Activated B cell treated with CpG ODN at 0.5 μM for 24 hours (primary cell): ENCODE measurements at regions of chr5 and their contacts with region 1.

Region 1: GRCh38 chr5:35089334-35090314 is 41.9 kb upstream of the AGXT2 start:
- DNase-seq: no peak
- ATAC-seq: no peak
- H3K4me3 Mint-ChIP-seq: no peak overlapping the region
- H3K27ac Mint-ChIP-seq: no peak overlapping the region
- H3K4me1 Mint-ChIP-seq: no peaks in the 10 kb centered on the region
- H3K27me3 Mint-ChIP-seq: peaks cover 3% of the 10 kb centered on the region
- CTCF ChIP-seq: peak; percentile 59

Region 2: GRCh38 chr5:34991486-34992238 is 98.0 kb before region 1 on chr5:
- CTCF ChIA-PET with region 1: no interaction called
- POLR2A ChIA-PET with region 1: no interaction called
- intact Hi-C with region 1: no loop called
- DNase-seq: no peak
- ATAC-seq: no peak
- H3K4me3 Mint-ChIP-seq: no peak overlapping the region
- H3K27ac Mint-ChIP-seq: no peak overlapping the region
- H3K4me1 Mint-ChIP-seq: no peaks in the 10 kb centered on the region
- H3K27me3 Mint-ChIP-seq: peaks cover 24% of the 10 kb centered on the region
- CTCF ChIP-seq: no peak

Region 3: GRCh38 chr5:35182541-35183535 is 93.2 kb after region 1 on chr5:
- CTCF ChIA-PET with region 1: no interaction called
- POLR2A ChIA-PET with region 1: no interaction called
- intact Hi-C with region 1: loop called (anchors 1 kb)
- DNase-seq: no peak
- ATAC-seq: peak; percentile 42
- H3K4me3 Mint-ChIP-seq: no peak overlapping the region
- H3K27ac Mint-ChIP-seq: no peak overlapping the region
- H3K4me1 Mint-ChIP-seq: no peaks in the 10 kb centered on the region
- H3K27me3 Mint-ChIP-seq: peaks cover 7% of the 10 kb centered on the region
- CTCF ChIP-seq: no peak

Region 4: GRCh38 chr5:35345222-35345621 is 255.6 kb after region 1 on chr5:
- CTCF ChIA-PET with region 1: no interaction called
- POLR2A ChIA-PET with region 1: no interaction called
- intact Hi-C with region 1: loop called (anchors 1 kb)
- DNase-seq: no peak
- ATAC-seq: no peak
- H3K4me3 Mint-ChIP-seq: no peak overlapping the region
- H3K27ac Mint-ChIP-seq: no peak overlapping the region
- H3K4me1 Mint-ChIP-seq: no peaks in the 10 kb centered on the region
- H3K27me3 Mint-ChIP-seq: no peaks in the 10 kb centered on the region
- CTCF ChIP-seq: no peak

Region 5: DNA sequence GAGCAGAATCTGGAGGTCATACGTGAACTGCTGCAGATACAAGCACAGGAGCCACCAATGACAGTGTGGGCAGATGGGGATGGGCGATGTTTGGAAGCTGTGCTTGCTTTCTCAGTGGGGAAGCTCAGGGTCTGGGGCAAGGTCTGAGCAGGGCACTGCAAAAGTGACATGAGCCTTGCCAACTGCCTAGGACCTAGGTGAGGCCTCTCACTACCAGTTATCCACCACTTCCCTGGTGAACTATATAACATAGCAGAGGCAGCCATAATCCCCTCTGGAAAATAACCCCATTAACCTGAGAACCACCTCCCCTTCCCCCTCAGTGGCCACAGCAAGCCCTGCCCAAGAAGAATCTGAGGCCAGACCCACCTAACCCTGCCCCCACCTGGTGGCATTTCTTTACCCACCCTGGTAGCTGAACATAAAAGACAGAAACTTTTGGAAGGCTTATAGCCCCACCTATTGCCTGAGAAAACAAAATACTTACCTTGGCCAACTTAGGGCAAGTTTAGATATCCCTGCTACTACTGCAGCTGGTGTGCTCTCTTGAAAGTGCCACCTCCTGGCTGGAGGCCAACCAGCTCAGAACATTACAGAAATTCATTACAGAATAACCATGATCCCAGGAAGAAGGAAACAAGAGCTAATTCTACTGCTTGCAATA is 509.2 kb after region 1 on chr5:
- CTCF ChIA-PET with region 1: interaction called, 3 read pairs
- POLR2A ChIA-PET with region 1: no interaction called
- intact Hi-C with region 1: loop called (anchors 1 kb)
- DNase-seq: no peak
- ATAC-seq: no peak
- H3K4me3 Mint-ChIP-seq: no peak overlapping the region
- H3K27ac Mint-ChIP-seq: no peak overlapping the region
- H3K4me1 Mint-ChIP-seq: no peaks in the 10 kb centered on the region
- H3K27me3 Mint-ChIP-seq: no peaks in the 10 kb centered on the region
- CTCF ChIP-seq: no peak

Region 6: DNA sequence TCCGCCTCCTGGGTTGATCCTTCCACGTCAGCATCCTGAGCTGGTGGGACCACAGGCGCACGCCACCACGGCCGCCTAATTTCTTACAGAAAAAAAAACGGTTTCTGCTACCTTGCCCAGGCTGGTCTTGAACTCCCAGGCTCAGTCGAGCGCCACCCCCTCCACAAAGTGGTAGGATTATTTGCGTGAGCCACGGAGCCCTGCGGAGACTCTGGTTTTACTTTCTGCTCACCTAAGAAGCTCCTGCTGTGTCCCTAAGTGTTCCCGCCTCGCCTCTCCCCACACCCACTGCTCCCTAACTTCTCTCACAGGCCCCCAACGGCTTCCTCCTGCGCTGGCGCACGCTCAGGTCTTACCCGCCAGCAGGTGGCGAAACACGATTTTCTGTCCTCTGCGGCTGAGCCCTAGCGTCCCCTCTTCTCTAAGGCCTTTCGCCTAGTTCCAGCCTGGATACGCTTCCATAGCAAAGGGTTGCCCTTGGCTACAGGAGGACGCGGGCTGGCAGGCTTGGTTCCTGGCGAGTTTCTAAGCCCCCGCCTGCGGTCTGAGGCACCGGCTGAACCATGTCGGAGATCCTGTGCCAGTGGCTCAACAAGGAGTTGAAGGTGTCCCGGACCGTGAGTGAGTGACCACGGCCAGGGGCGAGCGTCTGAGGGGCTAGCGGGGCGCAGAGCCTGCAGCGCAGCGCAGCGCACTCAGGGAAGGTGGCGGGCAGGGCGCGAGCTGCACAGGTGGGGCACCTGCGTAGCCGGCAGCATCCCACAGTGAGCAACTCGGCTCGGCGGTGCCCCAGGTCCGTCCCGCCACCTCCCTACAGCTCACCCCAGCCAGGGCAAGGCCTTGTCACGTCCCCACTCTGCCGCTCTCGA is 528.0 kb after region 1 on chr5 and contains the start of gene SPEF2:
- CTCF ChIA-PET with region 1: no interaction called
- POLR2A ChIA-PET with region 1: no interaction called
- intact Hi-C with region 1: no loop called
- DNase-seq: peak; percentile 36
- ATAC-seq: peak; percentile 78
- H3K4me3 Mint-ChIP-seq: peak within 1 kb of the TSS; percentile 85
- H3K27ac Mint-ChIP-seq: no peak within 1 kb of the TSS
- H3K4me1 Mint-ChIP-seq: peaks cover 10% of the 10 kb centered on the region
- H3K27me3 Mint-ChIP-seq: peaks cover 15% of the 10 kb centered on the region
- CTCF ChIP-seq: no peak
- total RNA-seq, gene SPEF2: 2.4 and 3.7 TPM in 2 replicates

Region 7: DNA sequence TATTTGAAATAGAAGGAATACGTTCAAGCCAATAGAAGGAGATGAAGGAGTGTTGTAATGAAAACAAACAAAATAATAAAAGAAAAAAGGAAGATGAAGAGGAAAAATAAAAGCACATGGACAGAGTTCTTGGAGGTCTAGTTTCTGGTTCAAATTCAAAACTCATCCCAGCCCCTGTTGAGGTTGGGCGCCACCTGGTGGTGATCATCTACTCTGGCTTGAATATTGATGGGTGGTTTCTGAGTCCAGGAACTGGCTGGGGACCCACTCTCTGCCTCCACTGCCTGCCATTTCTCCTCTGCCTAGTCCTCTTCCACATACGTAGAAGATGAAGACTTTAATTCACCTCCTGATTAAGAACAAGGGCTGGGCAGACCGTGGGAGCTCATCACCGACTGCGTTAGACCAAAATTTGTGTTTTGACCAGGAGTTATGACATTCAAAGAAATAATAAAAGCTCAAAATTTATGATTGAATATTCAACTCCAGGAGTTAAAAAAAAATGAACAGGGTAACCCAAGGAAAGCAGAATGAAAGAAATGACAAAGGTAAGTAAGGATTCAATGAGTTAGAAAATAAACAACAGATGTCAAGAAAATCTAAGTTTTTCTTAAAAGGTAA is 1417.8 kb after region 1 on chr5:
- CTCF ChIA-PET with region 1: no interaction called
- POLR2A ChIA-PET with region 1: no interaction called
- intact Hi-C with region 1: loop called (anchors 10 kb)
- DNase-seq: peak; percentile 56
- ATAC-seq: peak; percentile 28
- H3K4me3 Mint-ChIP-seq: no peak overlapping the region
- H3K27ac Mint-ChIP-seq: no peak overlapping the region
- H3K4me1 Mint-ChIP-seq: no peaks in the 10 kb centered on the region
- H3K27me3 Mint-ChIP-seq: peaks cover 13% of the 10 kb centered on the region
- CTCF ChIP-seq: peak; percentile 48